ENCODE measurements at regions of chr17 and their contacts with region 1.

Region 1: GRCh38 chr17:27353461-27354050 is 59.6 kb downstream of the WSB1 start:
- DNase-seq: peak; percentile 94 to 96
- ATAC-seq: peak; percentile 93 to 97 (median 97)
- H3K4me3 ChIP-seq: peak overlapping the region; percentile 49 to 75 (median 61)
- H3K27ac ChIP-seq: peak overlapping the region; percentile 82 to 98 (median 93)
- H3K4me1 ChIP-seq: peaks cover 9 to 42% (median 27%) of the 10 kb centered on the region in 9 donors
- H3K27me3 ChIP-seq: no peaks in the 10 kb centered on the region
- CTCF ChIP-seq: peak; percentile 85 to 99 (median 98)

Region 2: GRCh38 chr17:27236717-27237315 is 116.7 kb before region 1 on chr17:
- intact Hi-C with region 1: loop called in 5 of 10 experiments (anchors 5 kb)
- DNase-seq: peak in 1 of 2 donors; percentile 80
- ATAC-seq: peak in 7 of 8 donors; percentile 61 to 79 (median 77)
- H3K4me3 ChIP-seq: no peak overlapping the region
- H3K27ac ChIP-seq: no peak overlapping the region
- H3K4me1 ChIP-seq: peaks cover 0 to 54% (median 3%) of the 10 kb centered on the region in 9 donors
- H3K27me3 ChIP-seq: no peaks in the 10 kb centered on the region
- CTCF ChIP-seq: peak; percentile 84 to 97 (median 94)

Region 3: GRCh38 chr17:27332485-27333409 is 20.8 kb before region 1 on chr17:
- intact Hi-C with region 1: loop called in 1 of 10 experiments (anchors 1 kb)
- DNase-seq: peak; percentile 99
- ATAC-seq: peak; percentile 94 to 99 (median 97)
- H3K4me3 ChIP-seq: peak overlapping the region in 9 of 10 donors; percentile 23 to 62 (median 55)
- H3K27ac ChIP-seq: peak overlapping the region; percentile 87 to 99 (median 93)
- H3K4me1 ChIP-seq: peaks cover 3 to 37% (median 24%) of the 10 kb centered on the region in 9 donors
- H3K27me3 ChIP-seq: no peaks in the 10 kb centered on the region
- CTCF ChIP-seq: peak; percentile 81 to 99 (median 94)

Region 4: GRCh38 chr17:27396941-27397340 is 43.4 kb after region 1 on chr17:
- intact Hi-C with region 1: loop called in 1 of 10 experiments (anchors 5 kb)
- DNase-seq: no peak
- ATAC-seq: peak in 6 of 8 donors; percentile 44 to 61 (median 49)
- H3K4me3 ChIP-seq: no peak overlapping the region
- H3K27ac ChIP-seq: peak overlapping the region in 1 of 10 donors; percentile 1
- H3K4me1 ChIP-seq: peaks cover 0 to 24% (median 0%) of the 10 kb centered on the region in 9 donors
- H3K27me3 ChIP-seq: no peaks in the 10 kb centered on the region
- CTCF ChIP-seq: no peak

Region 5: DNA sequence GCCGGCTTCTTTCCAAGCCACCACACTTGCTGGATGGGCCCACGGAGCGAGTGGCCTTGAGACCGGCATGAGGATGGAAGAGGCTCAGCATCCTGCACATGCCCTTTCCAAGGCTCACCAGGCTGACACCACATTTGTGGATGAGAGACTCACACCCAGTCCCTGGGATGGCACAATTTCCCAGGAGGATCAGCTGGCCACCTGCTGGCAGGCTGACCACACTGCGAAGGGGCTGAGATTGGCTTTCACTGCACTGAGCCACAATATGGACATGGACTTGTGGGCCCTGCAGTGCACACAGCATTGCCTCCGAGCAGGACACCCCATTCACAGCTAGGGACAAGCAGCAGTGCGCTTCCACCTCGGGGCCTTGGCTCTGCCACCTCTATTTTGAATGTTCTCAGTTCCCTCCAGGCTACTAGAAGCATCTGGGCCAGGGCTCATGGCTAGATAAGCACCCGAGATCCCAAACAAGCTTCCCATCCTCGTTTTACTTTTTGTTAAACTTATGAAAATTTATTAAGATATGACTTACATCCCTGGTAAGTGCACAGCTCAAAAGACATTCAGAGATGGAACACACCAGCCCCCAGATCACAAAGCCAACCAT is 77.4 kb after region 1 on chr17:
- intact Hi-C with region 1: loop called in 4 of 10 experiments (anchors 5 to 10 kb)
- DNase-seq: peak; percentile 16 to 44
- ATAC-seq: peak in 6 of 8 donors; percentile 49 to 79 (median 68)
- H3K4me3 ChIP-seq: no peak overlapping the region
- H3K27ac ChIP-seq: no peak overlapping the region
- H3K4me1 ChIP-seq: no peaks in the 10 kb centered on the region
- H3K27me3 ChIP-seq: no peaks in the 10 kb centered on the region
- CTCF ChIP-seq: peak in 8 of 9 donors; percentile 14 to 58 (median 54)

Region 6: DNA sequence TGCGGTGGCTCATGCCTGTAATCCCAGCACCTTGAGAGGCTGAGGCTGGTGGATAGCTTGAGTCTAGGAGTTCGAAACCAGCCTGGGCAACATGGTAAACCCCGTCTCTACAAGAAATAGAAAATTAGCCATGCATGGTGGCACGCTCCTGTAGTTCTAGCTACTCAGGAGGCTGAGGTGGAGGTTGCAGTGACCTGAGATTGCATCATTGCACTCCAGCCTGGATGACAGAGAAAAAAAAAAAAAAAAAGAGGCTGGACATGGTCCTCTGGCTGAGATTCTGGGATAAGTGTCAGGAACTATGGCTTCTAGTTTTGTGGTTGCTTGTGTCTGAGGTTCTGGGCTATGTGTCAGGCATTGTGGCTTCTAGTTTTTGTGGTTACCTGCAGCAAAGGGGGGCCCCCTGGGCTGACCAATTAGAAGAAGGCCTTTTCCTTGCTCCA is 109.7 kb after region 1 on chr17:
- intact Hi-C with region 1: loop called in 3 of 10 experiments (anchors 5 to 10 kb)
- DNase-seq: no peak
- ATAC-seq: no peak
- H3K4me3 ChIP-seq: no peak overlapping the region
- H3K27ac ChIP-seq: no peak overlapping the region
- H3K4me1 ChIP-seq: peaks cover 1 to 64% (median 23%) of the 10 kb centered on the region in 9 donors
- H3K27me3 ChIP-seq: no peaks in the 10 kb centered on the region
- CTCF ChIP-seq: no peak

Region 7: DNA sequence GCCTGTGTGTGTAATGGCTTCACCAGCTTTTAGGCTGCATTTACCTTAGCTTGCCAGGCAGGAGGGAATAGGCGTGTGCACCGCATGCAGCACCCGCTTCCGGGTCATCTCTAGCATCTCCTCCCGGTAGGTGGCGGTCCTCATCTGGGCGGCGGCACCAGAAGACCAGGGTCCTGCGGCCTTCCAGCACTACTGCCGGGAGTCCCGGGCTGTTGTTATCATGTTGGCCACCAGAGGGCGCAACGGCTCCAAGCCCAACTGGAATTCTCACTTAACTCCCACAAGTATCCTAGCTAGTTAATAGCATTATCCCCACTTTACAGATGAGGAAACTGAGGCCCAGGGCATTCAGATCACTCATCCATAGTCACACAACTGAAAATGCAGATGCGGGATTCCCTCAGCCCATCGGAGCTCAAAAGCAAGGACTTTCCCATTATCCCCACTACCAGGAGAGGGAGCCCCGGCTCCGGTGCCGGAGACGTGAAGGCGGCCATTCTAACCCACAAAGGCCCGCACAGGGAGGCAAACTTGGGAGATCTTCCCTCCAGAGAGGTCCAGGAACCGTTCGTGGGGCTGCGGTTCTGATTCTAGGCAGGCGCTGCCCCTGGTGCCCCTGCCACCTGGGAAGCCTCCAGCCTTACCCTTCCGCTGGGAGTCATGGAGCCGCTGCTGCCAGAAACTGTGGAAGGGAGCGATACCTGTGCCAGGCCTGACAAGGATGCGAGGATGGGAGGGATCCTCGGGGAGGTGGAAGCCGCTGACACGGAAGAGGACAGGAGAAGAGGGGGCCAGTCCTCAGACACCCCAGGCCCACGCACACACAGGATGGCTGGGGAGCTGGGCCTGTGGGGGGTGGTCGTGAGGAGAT is 301.3 kb after region 1 on chr17:
- intact Hi-C with region 1: loop called in 2 of 10 experiments (anchors 5 to 10 kb)
- DNase-seq: peak; percentile 54 to 74
- ATAC-seq: peak in 7 of 8 donors; percentile 25 to 52 (median 46)
- H3K4me3 ChIP-seq: no peak overlapping the region
- H3K27ac ChIP-seq: no peak overlapping the region
- H3K4me1 ChIP-seq: peaks cover 0 to 4% (median 0%) of the 10 kb centered on the region in 9 donors
- H3K27me3 ChIP-seq: peaks cover 0 to 6% (median 0%) of the 10 kb centered on the region in 7 donors
- CTCF ChIP-seq: peak; percentile 88 to 97 (median 92)